ENCODE measurements at regions of chr3 and their contacts with region 1.

Region 1: DNA sequence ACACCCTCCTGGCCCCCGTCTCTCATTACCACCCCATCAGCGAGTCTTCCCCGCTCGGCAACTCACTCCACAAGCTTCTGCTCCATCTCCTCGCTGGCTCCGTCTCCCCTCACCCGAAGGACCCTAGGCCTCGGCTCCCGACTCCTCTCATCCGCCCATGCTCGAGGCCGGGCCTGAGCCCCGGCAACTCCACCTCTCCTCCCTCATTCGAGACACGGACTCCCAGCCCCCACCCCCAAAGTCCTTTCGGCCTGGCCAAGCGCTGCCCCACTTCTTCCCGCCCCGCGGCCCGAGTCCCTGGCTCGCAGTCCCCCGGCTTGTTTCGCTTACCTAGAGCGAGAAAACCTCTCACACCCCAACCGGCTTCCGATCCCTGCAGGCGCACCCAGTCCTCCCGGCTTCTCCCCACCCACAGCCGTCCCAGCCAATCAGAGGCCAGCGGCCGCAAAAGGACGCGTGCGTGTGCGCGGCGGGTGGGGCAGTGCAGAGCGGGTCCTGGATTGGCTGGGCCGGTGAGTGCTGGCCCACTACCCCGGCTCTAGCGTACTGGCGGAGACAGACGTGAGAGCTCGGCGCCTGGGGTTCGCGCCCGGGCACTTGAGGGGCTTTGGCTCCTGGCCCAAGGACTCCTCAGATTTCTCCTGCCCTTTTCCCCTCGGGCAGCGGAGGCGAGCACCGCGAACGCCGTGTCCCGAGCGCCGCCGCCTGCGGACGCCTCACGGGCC is at the start of gene HIGD1A:
- DNase-seq: peak; percentile 90 to 93 (median 91)
- H3K4me3 ChIP-seq: peak within 1 kb of the TSS; percentile 93
- H3K4me3 Mint-ChIP-seq: peak within 1 kb of the TSS; percentile 92 to 98 (median 96)
- H3K27ac ChIP-seq: peak within 1 kb of the TSS; percentile 90
- H3K27ac Mint-ChIP-seq: peak within 1 kb of the TSS; percentile 86 to 98 (median 94)
- H3K4me1 ChIP-seq: peaks cover 36% of the 10 kb centered on the region
- H3K4me1 Mint-ChIP-seq: peaks cover 33 to 51% (median 40%) of the 10 kb centered on the region in 3 donors
- H3K27me3 ChIP-seq: no peaks in the 10 kb centered on the region
- H3K27me3 Mint-ChIP-seq: peaks cover 0 to 19% of the 10 kb centered on the region in 2 donors
- total RNA-seq, gene HIGD1A: 89.3 to 93.2 TPM

Region 2: GRCh38 chr3:43455233-43455632 is 651.0 kb after region 1 on chr3:
- CTCF ChIA-PET with region 1: no interaction called
- POLR2A ChIA-PET with region 1: interaction called, 13 read pairs
- DNase-seq: no peak
- H3K4me3 ChIP-seq: no peak overlapping the region
- H3K4me3 Mint-ChIP-seq: no peak overlapping the region
- H3K27ac ChIP-seq: no peak overlapping the region
- H3K27ac Mint-ChIP-seq: no peak overlapping the region
- H3K4me1 ChIP-seq: peaks cover 10% of the 10 kb centered on the region
- H3K4me1 Mint-ChIP-seq: peaks cover 13 to 16% (median 16%) of the 10 kb centered on the region in 3 donors
- H3K27me3 ChIP-seq: no peaks in the 10 kb centered on the region
- H3K27me3 Mint-ChIP-seq: peaks cover 0 to 2% of the 10 kb centered on the region in 2 donors

Region 3: GRCh38 chr3:44318891-44319311 is 1514.6 kb after region 1 on chr3:
- CTCF ChIA-PET with region 1: no interaction called
- POLR2A ChIA-PET with region 1: no interaction called
- DNase-seq: no peak
- H3K4me3 ChIP-seq: no peak overlapping the region
- H3K4me3 Mint-ChIP-seq: no peak overlapping the region
- H3K27ac ChIP-seq: no peak overlapping the region
- H3K27ac Mint-ChIP-seq: no peak overlapping the region
- H3K4me1 ChIP-seq: no peaks in the 10 kb centered on the region
- H3K4me1 Mint-ChIP-seq: no peaks in the 10 kb centered on the region
- H3K27me3 ChIP-seq: peaks cover 3% of the 10 kb centered on the region
- H3K27me3 Mint-ChIP-seq: peaks cover 13 to 20% of the 10 kb centered on the region in 2 donors

Measured in CD8-positive, alpha-beta memory T cell (primary cell).